Vagina (tissue), 2 donors: ENCODE measurements at regions of chr15 and their contacts with region 1.

Region 1: GRCh38 chr15:79028411-79028964 is 62.1 kb downstream of the RASGRF1 start:
- DNase-seq: no peak
- H3K4me3 ChIP-seq: no peak overlapping the region
- H3K27ac ChIP-seq: no peak overlapping the region
- H3K4me1 ChIP-seq: no peaks in the 10 kb centered on the region
- H3K27me3 ChIP-seq: no peaks in the 10 kb centered on the region
- CTCF ChIP-seq: peak; percentile 41 to 86 (median 63)
- POLR2A ChIP-seq: no peak

Region 2: GRCh38 chr15:79184465-79184892 is 156.0 kb after region 1 on chr15:
- intact Hi-C with region 1: loop called (anchors 5 kb)
- DNase-seq: no peak
- H3K4me3 ChIP-seq: no peak overlapping the region
- H3K27ac ChIP-seq: no peak overlapping the region
- H3K4me1 ChIP-seq: peaks cover 4% of the 10 kb centered on the region
- H3K27me3 ChIP-seq: no peaks in the 10 kb centered on the region
- CTCF ChIP-seq: peak; percentile 83 to 96 (median 96)
- POLR2A ChIP-seq: no peak

Region 3: DNA sequence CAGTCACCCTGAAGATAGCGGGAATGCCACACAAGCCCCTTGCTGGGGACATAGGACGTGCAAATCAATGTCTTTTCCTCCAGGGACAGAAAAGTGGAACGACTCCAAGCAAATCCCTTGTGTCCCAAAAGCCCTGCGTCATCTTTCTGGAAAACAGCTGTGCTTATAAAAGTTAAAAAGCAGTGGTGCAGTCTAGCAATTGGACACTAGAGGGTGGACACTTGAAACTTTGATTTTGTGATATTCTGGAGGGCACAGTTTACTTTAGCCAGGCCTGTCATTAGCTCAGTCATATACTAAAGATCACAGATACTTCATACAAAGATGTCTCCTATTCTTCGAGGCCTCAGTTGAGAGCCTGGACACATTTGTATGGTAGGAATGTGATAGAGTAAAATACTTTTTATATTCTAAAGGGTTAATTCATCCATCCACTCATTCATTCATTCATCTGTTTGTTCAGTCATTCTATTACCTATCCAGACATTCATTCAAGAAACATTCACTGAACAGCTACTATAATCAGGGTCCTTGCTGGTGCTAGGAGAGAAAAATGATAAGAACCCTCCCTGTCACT is 190.2 kb after region 1 on chr15:
- intact Hi-C with region 1: no loop called
- DNase-seq: no peak
- H3K4me3 ChIP-seq: no peak overlapping the region
- H3K27ac ChIP-seq: no peak overlapping the region
- H3K4me1 ChIP-seq: no peaks in the 10 kb centered on the region
- H3K27me3 ChIP-seq: no peaks in the 10 kb centered on the region
- CTCF ChIP-seq: no peak
- POLR2A ChIP-seq: no peak

Region 4: DNA sequence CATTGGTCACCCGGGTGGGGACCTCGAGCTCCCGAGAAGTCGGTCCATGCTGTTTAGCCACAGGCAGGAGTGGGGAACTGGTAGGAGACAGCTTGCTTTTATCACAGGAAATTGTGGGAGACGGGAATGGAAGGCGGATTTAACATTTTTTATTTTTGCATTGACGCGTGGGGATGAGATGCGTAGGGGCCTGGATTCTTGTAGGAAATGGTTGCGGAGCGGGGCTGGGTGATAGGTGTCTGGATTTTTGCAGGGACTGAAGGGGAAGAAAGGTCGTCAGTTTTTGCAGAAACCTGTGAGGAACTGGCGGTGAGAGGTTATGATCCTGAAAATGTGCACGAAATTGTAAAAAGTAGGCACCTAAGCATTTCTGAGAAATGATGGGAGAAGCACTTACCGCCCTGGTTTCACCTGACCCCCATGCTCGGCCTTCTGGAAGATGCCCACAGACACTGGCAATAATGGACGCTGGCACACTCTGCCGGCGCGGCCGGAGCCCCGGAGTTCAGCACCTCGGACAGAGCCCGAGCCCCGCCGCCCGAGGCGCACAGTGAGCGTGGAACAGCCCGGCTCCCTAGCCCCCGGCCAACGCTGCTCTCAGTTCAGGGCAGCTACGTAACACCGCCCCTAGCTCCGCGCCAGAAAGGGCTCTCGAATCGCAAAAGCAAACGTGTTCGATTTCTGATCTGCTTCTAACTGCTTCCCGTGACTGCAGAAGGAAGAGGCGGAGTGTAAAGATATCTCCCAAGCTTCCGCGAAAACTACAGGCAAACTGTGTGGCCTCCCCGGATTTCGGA is 255.0 kb after region 1 on chr15:
- intact Hi-C with region 1: no loop called
- DNase-seq: no peak
- H3K4me3 ChIP-seq: no peak overlapping the region
- H3K27ac ChIP-seq: no peak overlapping the region
- H3K4me1 ChIP-seq: no peaks in the 10 kb centered on the region
- H3K27me3 ChIP-seq: peaks cover 18% of the 10 kb centered on the region
- CTCF ChIP-seq: no peak
- POLR2A ChIP-seq: no peak